GM13977 (cell line): ENCODE measurements at regions of chr20 and their contacts with region 1.

Region 1: GRCh38 chr20:50992733-50993457 is 30.0 kb downstream of the KCNG1 start:
- DNase-seq: peak; percentile 62
- CTCF ChIP-seq: peak; percentile 39

Region 2: GRCh38 chr20:51306503-51307358 is 313.8 kb after region 1 on chr20:
- in situ Hi-C with region 1: loop called (anchors 10 kb)
- DNase-seq: peak; percentile 83
- CTCF ChIP-seq: peak; percentile 96